ENCODE measurements at regions of chr7 and their contacts with region 1.

Region 1: GRCh38 chr7:21893388-21893787 is 52.3 kb downstream of the CDCA7L start:
- DNase-seq: no peak
- ATAC-seq: no peak
- H3K4me3 ChIP-seq: no peak overlapping the region
- H3K27ac ChIP-seq: no peak overlapping the region
- H3K4me1 ChIP-seq: no peaks in the 10 kb centered on the region
- H3K27me3 ChIP-seq: no peaks in the 10 kb centered on the region
- CTCF ChIP-seq: no peak

Region 2: GRCh38 chr7:21867816-21868575 is 25.4 kb before region 1 on chr7:
- CTCF ChIA-PET with region 1: no interaction called
- POLR2A ChIA-PET with region 1: interaction called, 15 read pairs
- in situ Hi-C with region 1: no loop called
- intact Hi-C with region 1: no loop called
- DNase-seq: no peak
- ATAC-seq: no peak
- H3K4me3 ChIP-seq: no peak overlapping the region
- H3K27ac ChIP-seq: no peak overlapping the region
- H3K4me1 ChIP-seq: no peaks in the 10 kb centered on the region
- H3K27me3 ChIP-seq: no peaks in the 10 kb centered on the region; the same call in 1 of the 2 replicates
- CTCF ChIP-seq: no peak

Region 3: GRCh38 chr7:21912305-21912704 is 18.9 kb after region 1 on chr7:
- CTCF ChIA-PET with region 1: no interaction called
- POLR2A ChIA-PET with region 1: no interaction called
- in situ Hi-C with region 1: no loop called
- intact Hi-C with region 1: no loop called
- DNase-seq: no peak
- ATAC-seq: no peak
- H3K4me3 ChIP-seq: no peak overlapping the region
- H3K27ac ChIP-seq: no peak overlapping the region
- H3K4me1 ChIP-seq: no peaks in the 10 kb centered on the region
- H3K27me3 ChIP-seq: no peaks in the 10 kb centered on the region
- CTCF ChIP-seq: no peak